CD14-positive monocyte (primary cell): ENCODE measurements at regions of chr16 and their contacts with region 1.

Region 1: DNA sequence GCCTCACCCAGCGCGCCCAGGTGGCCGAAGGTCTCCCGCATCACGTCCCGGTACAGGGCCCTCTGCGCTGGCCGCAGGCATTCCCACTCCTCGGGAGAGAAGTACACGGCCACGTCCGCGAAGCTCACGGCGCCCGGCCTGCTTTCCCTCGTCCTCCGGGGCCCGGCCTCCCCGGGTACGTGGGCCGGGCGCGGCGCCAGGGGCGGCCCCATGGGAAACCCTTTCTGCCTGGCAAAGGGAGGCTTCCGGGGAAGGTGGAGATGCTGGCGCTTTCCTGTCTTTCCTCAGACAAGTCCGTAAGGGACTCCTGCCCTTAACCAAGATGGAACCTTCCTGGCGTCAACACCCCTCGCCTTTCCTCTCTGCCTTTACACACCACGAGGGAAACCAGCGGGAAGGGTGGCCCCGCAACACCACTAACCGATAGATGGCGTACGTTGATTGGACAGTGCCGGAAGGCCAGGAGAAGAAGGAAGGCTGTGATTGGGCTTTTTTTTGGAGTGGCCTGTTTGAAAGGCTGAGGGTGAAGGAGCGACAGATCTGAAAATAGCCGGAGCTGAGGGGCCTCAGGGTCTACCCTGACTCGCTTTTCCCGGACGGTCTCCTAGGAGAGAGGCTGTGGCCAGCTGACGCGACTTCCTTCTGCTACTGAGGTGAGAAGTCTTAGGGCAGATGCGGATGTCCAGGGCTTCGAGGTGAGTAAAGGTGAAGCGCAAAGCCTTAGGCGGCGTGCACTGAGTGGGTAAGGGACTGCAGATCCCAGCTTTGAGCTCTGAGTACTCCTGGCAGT is at the start of gene ZNF785:
- DNase-seq: peak; percentile 93 to 96 (median 95)
- H3K4me3 ChIP-seq: peak within 1 kb of the TSS; percentile 58 to 86 (median 59)
- H3K4me3 Mint-ChIP-seq: peak within 1 kb of the TSS; percentile 87 to 92
- H3K27ac ChIP-seq: peak within 1 kb of the TSS; percentile 39 to 79
- H3K27ac Mint-ChIP-seq: peak within 1 kb of the TSS; percentile 68 to 86 (median 82)
- H3K4me1 ChIP-seq: peaks cover 14 to 18% of the 10 kb centered on the region in 2 donors
- H3K4me1 Mint-ChIP-seq: peaks cover 22% of the 10 kb centered on the region
- H3K27me3 ChIP-seq: no peaks in the 10 kb centered on the region
- H3K27me3 Mint-ChIP-seq: no peaks in the 10 kb centered on the region
- CTCF ChIP-seq: no peak
- polyA plus RNA-seq, gene ZNF785: 0.67 to 9.0 (median 1.1) TPM

Region 2: DNA sequence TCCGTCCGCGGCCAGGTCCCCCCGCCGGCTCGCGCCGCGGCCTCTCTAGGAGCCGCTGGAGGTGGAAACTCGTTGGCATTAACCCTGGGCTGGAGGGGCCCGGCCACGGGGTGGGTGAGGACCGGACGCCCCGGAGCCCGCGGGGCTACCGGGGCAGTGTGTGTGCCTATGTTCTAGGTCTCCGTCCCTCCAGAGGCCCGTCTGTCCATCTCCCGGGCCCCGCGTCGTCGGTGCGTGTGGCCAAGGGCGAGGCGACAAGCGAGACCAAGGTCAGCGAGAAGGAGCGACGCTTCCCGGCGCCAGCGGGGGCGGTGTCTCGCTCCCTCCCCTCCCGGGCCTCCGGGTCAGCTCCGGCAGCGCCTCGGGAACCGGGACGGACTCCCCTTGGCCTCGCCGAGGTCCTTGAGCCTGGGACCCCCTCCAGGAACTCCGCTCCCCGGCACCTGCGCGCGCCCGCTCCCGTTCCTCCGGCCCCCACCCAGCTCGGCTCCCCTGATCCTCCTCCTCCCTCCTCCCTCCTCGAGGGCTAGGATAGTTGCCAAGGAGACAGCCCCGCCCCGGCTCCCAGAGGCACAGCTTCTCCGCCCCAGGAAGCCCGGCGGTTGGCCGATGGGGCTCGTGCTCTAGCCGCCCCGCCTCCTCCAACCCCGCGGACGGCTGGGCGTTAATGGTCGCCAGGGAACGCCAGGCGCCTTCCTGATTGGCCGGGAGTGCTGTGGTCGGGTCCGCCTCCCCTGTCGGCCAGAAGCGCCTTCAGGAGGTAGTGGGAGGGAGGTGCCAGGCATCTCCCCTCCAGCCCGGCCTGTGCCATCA is 58.6 kb before region 1 on chr16:
- intact Hi-C with region 1: loop called (anchors 5 kb)
- DNase-seq: peak; percentile 93 to 96 (median 95)
- H3K4me3 ChIP-seq: peak overlapping the region; percentile 59 to 93 (median 63)
- H3K4me3 Mint-ChIP-seq: peak overlapping the region; percentile 84 to 92
- H3K27ac ChIP-seq: peak overlapping the region; percentile 85 to 87
- H3K27ac Mint-ChIP-seq: peak overlapping the region; percentile 92 to 97 (median 97)
- H3K4me1 ChIP-seq: peaks cover 28 to 39% of the 10 kb centered on the region in 2 donors
- H3K4me1 Mint-ChIP-seq: peaks cover 29% of the 10 kb centered on the region
- H3K27me3 ChIP-seq: no peaks in the 10 kb centered on the region
- H3K27me3 Mint-ChIP-seq: peaks cover 0 to 4% (median 3%) of the 10 kb centered on the region in 3 donors
- CTCF ChIP-seq: peak; percentile 49